Aorta (tissue), 5 donors: ENCODE measurements at regions of chr10 and their contacts with region 1.

Region 1: GRCh38 chr10:18140149-18140956 is at the start of gene CACNB2:
- DNase-seq: peak; percentile 80 to 94
- ATAC-seq: peak; percentile 89
- H3K4me3 ChIP-seq: peak within 1 kb of the TSS; percentile 73 to 83
- H3K27ac ChIP-seq: peak within 1 kb of the TSS; percentile 59 to 81
- H3K4me1 ChIP-seq: peaks cover 0 to 3% of the 10 kb centered on the region in 2 donors
- H3K27me3 ChIP-seq: no peaks in the 10 kb centered on the region
- total RNA-seq, gene CACNB2: 7.6 to 14.6 TPM

Region 2: DNA sequence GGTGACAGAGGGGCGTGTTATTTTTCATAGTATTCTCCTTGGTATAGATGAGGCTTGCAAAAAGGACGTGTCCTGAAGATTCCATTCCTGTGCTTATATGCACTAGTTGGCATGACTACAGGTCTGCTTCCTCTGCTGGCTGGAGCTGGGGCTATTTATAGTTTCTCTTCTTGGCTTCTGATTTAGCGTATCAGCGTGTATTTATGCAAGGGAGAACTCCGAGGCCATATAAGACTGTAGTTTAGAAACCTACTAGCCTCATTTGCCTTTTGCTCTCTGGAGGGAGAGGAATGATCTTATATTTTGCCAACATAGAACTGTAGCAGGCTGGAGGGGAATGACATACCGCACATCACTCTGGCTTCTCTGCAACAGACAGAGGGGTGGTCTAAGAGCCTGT is 39.5 kb after region 1 on chr10:
- intact Hi-C with region 1: loop called in 1 of 2 experiments (anchors 5 kb)
- DNase-seq: no peak
- ATAC-seq: peak; percentile 81
- H3K4me3 ChIP-seq: no peak overlapping the region
- H3K27ac ChIP-seq: peak overlapping the region; percentile 92 to 93
- H3K4me1 ChIP-seq: peaks cover 2 to 4% of the 10 kb centered on the region in 2 donors
- H3K27me3 ChIP-seq: no peaks in the 10 kb centered on the region

Region 3: GRCh38 chr10:18204039-18204835 is 63.9 kb after region 1 on chr10:
- intact Hi-C with region 1: loop called in 1 of 2 experiments (anchors 10 kb)
- DNase-seq: no peak
- ATAC-seq: no peak
- H3K4me3 ChIP-seq: no peak overlapping the region
- H3K27ac ChIP-seq: no peak overlapping the region
- H3K4me1 ChIP-seq: peaks cover 3 to 11% of the 10 kb centered on the region in 2 donors
- H3K27me3 ChIP-seq: no peaks in the 10 kb centered on the region

Region 4: GRCh38 chr10:18271491-18271890 is 131.1 kb after region 1 on chr10:
- intact Hi-C with region 1: no loop called
- DNase-seq: no peak
- ATAC-seq: no peak
- H3K4me3 ChIP-seq: no peak overlapping the region
- H3K27ac ChIP-seq: no peak overlapping the region
- H3K4me1 ChIP-seq: peaks cover 2 to 3% of the 10 kb centered on the region in 2 donors
- H3K27me3 ChIP-seq: no peaks in the 10 kb centered on the region